Transverse colon (tissue), 4 donors: ENCODE measurements at regions of chr2 and their contacts with region 1.

Region 1: DNA sequence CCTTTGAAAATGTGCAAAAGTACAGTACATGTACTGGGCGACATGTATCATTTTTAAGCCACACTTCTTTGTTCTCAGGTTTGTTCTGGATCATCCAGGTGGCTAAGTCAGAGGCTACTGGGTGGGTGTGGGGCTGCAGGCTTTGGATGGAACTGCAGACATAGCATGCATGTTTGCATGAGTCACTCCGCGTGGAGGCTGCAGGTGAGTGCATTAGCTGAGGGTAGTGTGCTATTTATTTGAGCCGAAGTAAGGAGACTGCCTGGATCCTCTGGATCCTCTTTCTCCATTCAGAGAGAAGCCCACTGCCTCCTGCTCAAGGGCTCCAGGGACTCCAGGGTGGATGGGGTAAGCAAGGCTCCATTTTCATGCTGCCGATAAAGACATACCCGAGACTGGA is 9.4 kb upstream of the NEURL3 start:
- DNase-seq: no peak
- H3K4me3 ChIP-seq: no peak overlapping the region
- H3K27ac ChIP-seq: no peak overlapping the region
- H3K4me1 ChIP-seq: no peaks in the 10 kb centered on the region
- H3K27me3 ChIP-seq: no peaks in the 10 kb centered on the region
- CTCF ChIP-seq: no peak
- EP300 ChIP-seq: no peak
- POLR2A ChIP-seq: no peak

Region 2: DNA sequence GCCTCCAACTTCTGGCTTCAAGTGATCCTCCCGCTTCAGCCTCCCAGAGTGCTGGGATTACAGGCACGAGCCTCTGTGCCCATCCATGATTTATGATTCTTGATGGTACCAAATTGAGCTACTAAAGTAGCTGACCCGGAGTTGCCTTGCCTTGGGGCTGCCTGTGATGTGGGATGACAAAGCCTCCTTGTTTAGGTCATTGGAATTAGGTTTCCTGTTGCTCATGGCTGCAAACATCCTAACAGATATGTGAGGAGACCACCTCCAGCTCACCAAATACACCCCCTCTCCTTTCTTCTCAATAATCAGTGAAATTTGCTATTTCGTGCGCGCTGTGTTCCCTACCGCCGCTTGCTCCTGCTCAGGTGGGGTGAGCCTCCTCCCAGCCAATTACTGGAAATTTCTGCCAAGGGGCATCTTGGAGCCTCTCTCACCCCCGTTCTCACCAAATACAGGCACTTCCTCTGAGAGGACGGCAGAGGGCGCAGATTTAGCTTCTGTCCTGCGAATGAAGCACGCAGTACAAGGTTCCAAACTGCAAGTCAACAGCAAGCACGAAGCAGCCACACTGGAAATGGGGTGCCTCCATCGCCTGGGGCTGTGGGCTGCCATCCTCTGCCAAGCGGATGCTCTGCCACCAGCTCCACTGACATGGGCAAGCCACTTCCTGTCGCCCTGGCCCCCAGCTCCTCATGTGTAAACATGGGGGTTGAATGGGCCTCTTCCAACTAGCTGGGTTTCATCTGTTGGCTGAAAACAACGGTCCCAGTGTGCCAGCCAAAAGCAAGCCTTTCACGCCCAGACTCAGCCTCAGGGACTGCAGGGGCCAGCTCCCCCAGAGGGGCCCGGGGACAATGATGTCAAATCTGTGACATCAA is 107.2 kb before region 1 on chr2:
- in situ Hi-C with region 1: loop called in 3 of 4 experiments (anchors 5 to 10 kb)
- intact Hi-C with region 1: loop called (anchors 5 kb)
- DNase-seq: peak; percentile 71
- H3K4me3 ChIP-seq: no peak overlapping the region
- H3K27ac ChIP-seq: no peak overlapping the region
- H3K4me1 ChIP-seq: peaks cover 0 to 16% (median 4%) of the 10 kb centered on the region in 4 donors
- H3K27me3 ChIP-seq: no peaks in the 10 kb centered on the region
- CTCF ChIP-seq: peak; percentile 77 to 85 (median 78)
- EP300 ChIP-seq: no peak
- POLR2A ChIP-seq: no peak

Region 3: GRCh38 chr2:96538487-96539214 is 24.1 kb after region 1 on chr2:
- in situ Hi-C with region 1: no loop called
- intact Hi-C with region 1: no loop called
- DNase-seq: peak; percentile 87
- H3K4me3 ChIP-seq: peak overlapping the region in 3 of 4 donors; percentile 83 to 99 (median 98)
- H3K27ac ChIP-seq: peak overlapping the region; percentile 97 to 99 (median 99)
- H3K4me1 ChIP-seq: peaks cover 18 to 70% (median 53%) of the 10 kb centered on the region in 4 donors
- H3K27me3 ChIP-seq: no peaks in the 10 kb centered on the region
- CTCF ChIP-seq: no peak
- EP300 ChIP-seq: peak; percentile 40
- POLR2A ChIP-seq: peak; percentile 61